Naive thymus-derived CD4-positive, alpha-beta T cell (primary cell): ENCODE measurements at regions of chr12 and their contacts with region 1.

Region 1: GRCh38 chr12:6867413-6868210 is at the start of gene TPI1:
- DNase-seq: peak; percentile 40 to 87 (median 52)
- ATAC-seq: peak; percentile 88
- H3K4me3 ChIP-seq: peak within 1 kb of the TSS; percentile 61
- H3K4me3 Mint-ChIP-seq: peak within 1 kb of the TSS; percentile 87 to 93 (median 91)
- H3K27ac ChIP-seq: peak within 1 kb of the TSS; percentile 82
- H3K27ac Mint-ChIP-seq: peak within 1 kb of the TSS; percentile 76 to 95 (median 87)
- H3K4me1 ChIP-seq: peaks cover 38 to 39% of the 10 kb centered on the region in 2 donors
- H3K4me1 Mint-ChIP-seq: peaks cover 34 to 55% (median 44%) of the 10 kb centered on the region in 7 donors
- H3K27me3 ChIP-seq: no peaks in the 10 kb centered on the region
- H3K27me3 Mint-ChIP-seq: no peaks in the 10 kb centered on the region
- total RNA-seq, gene TPI1: 89.7 to 1,293 (median 134) TPM

Region 2: DNA sequence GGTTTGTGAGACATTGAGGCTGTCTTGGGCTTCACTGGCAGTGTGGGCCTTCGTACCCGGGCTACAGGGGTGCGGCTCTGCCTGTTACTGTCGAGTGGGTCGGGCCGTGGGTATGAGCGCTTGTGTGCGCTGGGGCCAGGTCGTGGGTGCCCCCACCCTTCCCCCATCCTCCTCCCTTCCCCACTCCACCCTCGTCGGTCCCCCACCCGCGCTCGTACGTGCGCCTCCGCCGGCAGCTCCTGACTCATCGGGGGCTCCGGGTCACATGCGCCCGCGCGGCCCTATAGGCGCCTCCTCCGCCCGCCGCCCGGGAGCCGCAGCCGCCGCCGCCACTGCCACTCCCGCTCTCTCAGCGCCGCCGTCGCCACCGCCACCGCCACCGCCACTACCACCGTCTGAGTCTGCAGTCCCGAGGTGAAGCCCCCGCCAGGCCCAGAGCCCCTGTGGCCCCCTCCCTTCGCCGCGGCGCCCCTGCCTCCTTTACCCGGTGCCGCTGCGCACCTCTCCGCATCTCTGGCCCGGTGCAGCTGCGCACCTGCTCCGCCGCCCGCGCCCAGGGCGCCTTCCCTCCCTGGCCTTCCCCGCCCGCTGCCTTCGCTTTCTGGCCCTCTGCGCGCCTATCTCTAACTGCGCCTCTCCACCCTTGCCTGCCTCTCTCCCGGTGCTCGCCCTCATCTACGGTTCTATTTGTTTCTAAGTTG is 46.8 kb after region 1 on chr12 and contains the start of gene ENO2:
- CTCF ChIA-PET with region 1: interaction called, 6 read pairs
- POLR2A ChIA-PET with region 1: interaction called, 35 read pairs
- intact Hi-C with region 1: loop called (anchors 1 to 2 kb)
- DNase-seq: peak; percentile 68 to 90 (median 81)
- ATAC-seq: peak; percentile 96
- H3K4me3 ChIP-seq: peak within 1 kb of the TSS; percentile 79
- H3K4me3 Mint-ChIP-seq: peak within 1 kb of the TSS; percentile 88 to 100 (median 96)
- H3K27ac ChIP-seq: peak within 1 kb of the TSS; percentile 86
- H3K27ac Mint-ChIP-seq: peak within 1 kb of the TSS; percentile 86 to 99 (median 93)
- H3K4me1 ChIP-seq: peaks cover 11 to 14% of the 10 kb centered on the region in 2 donors
- H3K4me1 Mint-ChIP-seq: peaks cover 0 to 53% (median 36%) of the 10 kb centered on the region in 7 donors
- H3K27me3 ChIP-seq: no peaks in the 10 kb centered on the region
- H3K27me3 Mint-ChIP-seq: peaks cover 0 to 4% (median 0%) of the 10 kb centered on the region in 5 donors
- total RNA-seq, gene ENO2: 65.3 to 193 (median 178) TPM

Region 3: GRCh38 chr12:6944381-6945186 is 77.0 kb after region 1 on chr12:
- CTCF ChIA-PET with region 1: interaction called, 21 read pairs
- POLR2A ChIA-PET with region 1: interaction called, 52 read pairs
- intact Hi-C with region 1: loop called in 1 of 2 experiments (anchors 1 kb)
- DNase-seq: peak; percentile 70 to 87 (median 84)
- ATAC-seq: peak; percentile 65
- H3K4me3 ChIP-seq: peak overlapping the region; percentile 94
- H3K4me3 Mint-ChIP-seq: peak overlapping the region; percentile 88 to 100 (median 96)
- H3K27ac ChIP-seq: peak overlapping the region; percentile 95
- H3K27ac Mint-ChIP-seq: peak overlapping the region; percentile 95 to 100 (median 98)
- H3K4me1 ChIP-seq: peaks cover 56% of the 10 kb centered on the region in 2 donors
- H3K4me1 Mint-ChIP-seq: peaks cover 42 to 75% (median 60%) of the 10 kb centered on the region in 7 donors
- H3K27me3 ChIP-seq: no peaks in the 10 kb centered on the region
- H3K27me3 Mint-ChIP-seq: no peaks in the 10 kb centered on the region

Region 4: GRCh38 chr12:7042842-7043241 is 175.2 kb after region 1 on chr12:
- CTCF ChIA-PET with region 1: interaction called, 4 read pairs
- POLR2A ChIA-PET with region 1: no interaction called
- intact Hi-C with region 1: loop called in 1 of 2 experiments (anchors 2 kb)
- DNase-seq: peak in 4 of 9 donors; percentile 5 to 12 (median 11)
- ATAC-seq: peak; percentile 40
- H3K4me3 ChIP-seq: no peak overlapping the region
- H3K4me3 Mint-ChIP-seq: no peak overlapping the region
- H3K27ac ChIP-seq: no peak overlapping the region
- H3K27ac Mint-ChIP-seq: no peak overlapping the region
- H3K4me1 ChIP-seq: no peaks in the 10 kb centered on the region
- H3K4me1 Mint-ChIP-seq: peaks cover 0 to 19% (median 15%) of the 10 kb centered on the region in 7 donors
- H3K27me3 ChIP-seq: no peaks in the 10 kb centered on the region
- H3K27me3 Mint-ChIP-seq: peaks cover 0 to 5% (median 0%) of the 10 kb centered on the region in 5 donors

Region 5: GRCh38 chr12:7108796-7109571 is 241.4 kb after region 1 on chr12 and contains the start of gene C1RL:
- CTCF ChIA-PET with region 1: interaction called, 45 read pairs
- POLR2A ChIA-PET with region 1: interaction called, 5 read pairs
- intact Hi-C with region 1: loop called (anchors 1 kb)
- DNase-seq: peak; percentile 50 to 88 (median 65)
- ATAC-seq: peak; percentile 69
- H3K4me3 ChIP-seq: peak within 1 kb of the TSS; percentile 95
- H3K4me3 Mint-ChIP-seq: peak within 1 kb of the TSS; percentile 90 to 98 (median 94)
- H3K27ac ChIP-seq: peak within 1 kb of the TSS; percentile 79
- H3K27ac Mint-ChIP-seq: peak within 1 kb of the TSS; percentile 84 to 95 (median 93)
- H3K4me1 ChIP-seq: peaks cover 6% of the 10 kb centered on the region in 2 donors
- H3K4me1 Mint-ChIP-seq: peaks cover 29 to 64% (median 43%) of the 10 kb centered on the region in 7 donors
- H3K27me3 ChIP-seq: no peaks in the 10 kb centered on the region
- H3K27me3 Mint-ChIP-seq: no peaks in the 10 kb centered on the region
- total RNA-seq, gene C1RL: 18.5 to 38.6 (median 24.4) TPM

Region 6: DNA sequence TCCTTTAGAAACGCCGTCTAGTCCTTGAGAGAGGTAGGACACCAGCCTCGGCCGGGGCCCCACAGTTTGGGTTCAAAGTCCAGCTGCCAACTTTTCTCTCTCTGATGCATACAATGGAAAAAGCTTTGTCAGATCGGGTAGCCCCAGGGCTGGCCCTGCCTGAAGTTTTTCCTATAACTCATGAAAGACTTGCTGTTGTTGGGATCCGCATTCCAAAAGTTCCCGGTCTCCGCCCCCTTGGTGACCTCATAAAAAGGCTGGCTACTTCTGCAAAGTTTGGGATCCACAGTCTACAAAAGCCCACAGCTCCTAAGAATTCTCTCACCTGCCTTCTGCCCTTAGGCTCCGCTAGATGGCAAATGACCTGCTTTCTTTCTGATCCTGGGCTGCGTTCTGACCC is 1552.9 kb after region 1 on chr12:
- CTCF ChIA-PET with region 1: no interaction called
- POLR2A ChIA-PET with region 1: no interaction called
- intact Hi-C with region 1: no loop called
- DNase-seq: no peak
- ATAC-seq: no peak
- H3K4me3 ChIP-seq: no peak overlapping the region
- H3K4me3 Mint-ChIP-seq: no peak overlapping the region
- H3K27ac ChIP-seq: no peak overlapping the region
- H3K27ac Mint-ChIP-seq: no peak overlapping the region
- H3K4me1 ChIP-seq: no peaks in the 10 kb centered on the region
- H3K4me1 Mint-ChIP-seq: peaks cover 0 to 3% (median 0%) of the 10 kb centered on the region in 7 donors
- H3K27me3 ChIP-seq: no peaks in the 10 kb centered on the region
- H3K27me3 Mint-ChIP-seq: no peaks in the 10 kb centered on the region